ENCODE measurements at regions of chr4 and their contacts with region 1.

Region 1: GRCh38 chr4:145481164-145481941 is at the start of gene SMAD1:
- DNase-seq: peak; percentile 83
- H3K4me3 Mint-ChIP-seq: no peak within 1 kb of the TSS
- H3K27ac Mint-ChIP-seq: no peak within 1 kb of the TSS
- H3K4me1 Mint-ChIP-seq: peaks cover 12% of the 10 kb centered on the region
- H3K27me3 Mint-ChIP-seq: no peaks in the 10 kb centered on the region
- CTCF ChIP-seq: no peak
- total RNA-seq, gene SMAD1: 23.7 and 27.9 TPM in 2 replicates

Region 2: GRCh38 chr4:145125396-145125795 is 356.0 kb before region 1 on chr4:
- CTCF ChIA-PET with region 1: no interaction called
- POLR2A ChIA-PET with region 1: no interaction called
- intact Hi-C with region 1: no loop called
- DNase-seq: no peak
- H3K4me3 Mint-ChIP-seq: no peak overlapping the region
- H3K27ac Mint-ChIP-seq: no peak overlapping the region
- H3K4me1 Mint-ChIP-seq: no peaks in the 10 kb centered on the region
- H3K27me3 Mint-ChIP-seq: no peaks in the 10 kb centered on the region
- CTCF ChIP-seq: no peak

Region 3: DNA sequence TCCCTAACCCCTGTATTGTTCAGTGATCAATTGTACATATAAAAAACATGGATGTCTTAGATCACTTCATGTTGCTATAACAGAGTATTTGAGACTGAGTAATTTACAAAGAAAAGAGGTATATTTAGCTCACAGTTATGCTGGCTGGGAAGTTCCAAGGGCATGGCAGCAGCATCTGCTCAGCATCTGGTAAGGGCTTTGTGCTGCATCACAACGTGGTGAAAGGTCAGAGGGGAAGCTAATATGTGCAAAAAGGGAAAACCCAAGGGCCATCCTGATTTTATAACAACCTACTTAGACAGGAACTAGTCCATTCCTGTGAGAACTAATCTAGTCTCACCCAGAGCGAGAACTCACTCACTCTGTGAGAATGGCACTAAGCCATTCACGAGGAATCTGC is 172.8 kb before region 1 on chr4:
- CTCF ChIA-PET with region 1: no interaction called
- POLR2A ChIA-PET with region 1: no interaction called
- intact Hi-C with region 1: no loop called
- DNase-seq: no peak
- H3K4me3 Mint-ChIP-seq: no peak overlapping the region
- H3K27ac Mint-ChIP-seq: no peak overlapping the region
- H3K4me1 Mint-ChIP-seq: peaks cover 6% of the 10 kb centered on the region
- H3K27me3 Mint-ChIP-seq: no peaks in the 10 kb centered on the region
- CTCF ChIP-seq: no peak

Region 4: DNA sequence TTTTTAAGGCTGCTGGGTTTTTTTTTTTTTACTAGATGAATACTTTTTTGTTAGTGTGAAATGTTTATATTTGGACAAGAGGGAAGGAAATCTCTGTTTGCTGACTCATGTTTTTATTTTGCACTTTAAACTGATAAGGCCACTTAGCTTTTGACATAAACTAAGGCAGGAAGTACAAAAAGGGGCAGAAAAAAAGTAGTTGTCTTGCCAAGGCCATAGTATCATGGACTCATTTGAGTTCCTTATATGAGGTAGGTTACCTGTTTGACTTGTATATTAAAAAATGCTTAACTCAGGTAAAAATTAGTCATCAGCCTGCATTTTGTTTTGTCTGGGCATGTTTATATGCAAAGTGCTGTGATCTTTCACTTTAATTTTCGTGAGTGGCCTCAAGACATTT is 26.3 kb after region 1 on chr4:
- CTCF ChIA-PET with region 1: interaction called, 3 read pairs
- POLR2A ChIA-PET with region 1: interaction called, 22 read pairs
- intact Hi-C with region 1: no loop called
- DNase-seq: peak; percentile 54
- H3K4me3 Mint-ChIP-seq: peak overlapping the region; percentile 50
- H3K27ac Mint-ChIP-seq: peak overlapping the region; percentile 97
- H3K4me1 Mint-ChIP-seq: peaks cover 11% of the 10 kb centered on the region
- H3K27me3 Mint-ChIP-seq: no peaks in the 10 kb centered on the region
- CTCF ChIP-seq: no peak

Region 5: GRCh38 chr4:145557720-145558119 is 76.4 kb after region 1 on chr4:
- CTCF ChIA-PET with region 1: interaction called, 13 read pairs
- POLR2A ChIA-PET with region 1: interaction called, 3 read pairs
- intact Hi-C with region 1: loop called (anchors 1 kb)
- DNase-seq: peak; percentile 72
- H3K4me3 Mint-ChIP-seq: no peak overlapping the region
- H3K27ac Mint-ChIP-seq: peak overlapping the region; percentile 37
- H3K4me1 Mint-ChIP-seq: no peaks in the 10 kb centered on the region
- H3K27me3 Mint-ChIP-seq: no peaks in the 10 kb centered on the region
- CTCF ChIP-seq: peak; percentile 90

Region 6: DNA sequence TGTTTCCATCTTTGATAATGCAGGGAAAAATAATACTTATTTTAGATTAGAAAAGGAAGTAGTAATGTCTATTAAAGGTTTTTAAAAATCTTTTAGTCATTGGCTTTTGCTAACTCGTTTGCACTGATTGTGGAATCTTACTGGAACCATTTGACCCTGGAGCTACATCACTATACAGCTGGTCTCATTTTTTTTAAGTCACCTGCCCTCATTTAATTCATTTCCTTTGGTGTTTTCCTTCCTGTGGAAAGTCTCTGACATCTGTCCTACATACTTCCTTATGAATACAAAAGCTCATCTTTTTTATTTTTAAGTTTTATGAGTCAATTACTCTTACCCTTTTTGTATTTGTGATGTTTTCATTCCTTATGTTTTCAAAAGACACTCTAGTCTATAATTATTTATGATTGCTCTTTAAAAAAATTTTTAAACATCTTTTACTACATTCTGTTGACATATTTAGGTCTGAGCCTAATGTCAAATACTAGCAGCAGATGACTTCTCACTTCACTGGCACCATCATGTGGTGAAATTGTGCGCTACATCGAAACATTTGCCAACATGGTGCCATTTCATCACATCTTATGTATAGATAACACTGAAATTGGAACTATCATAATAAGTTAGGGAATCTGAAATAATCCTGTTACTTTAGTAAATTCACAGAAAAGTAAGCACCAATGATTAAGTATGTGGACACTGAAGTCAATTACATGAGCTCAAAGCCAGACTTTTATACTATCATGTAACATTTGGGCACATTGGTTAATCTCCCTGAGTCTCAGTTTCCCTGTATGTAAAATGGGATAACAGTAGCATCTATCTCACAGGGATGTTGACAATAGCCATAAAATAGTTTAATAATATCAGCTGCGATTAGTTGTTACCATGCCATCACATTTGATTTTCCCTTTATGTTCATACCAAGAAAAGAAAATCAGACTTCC is 128.4 kb after region 1 on chr4:
- CTCF ChIA-PET with region 1: interaction called, 5 read pairs
- POLR2A ChIA-PET with region 1: interaction called, 3 read pairs
- intact Hi-C with region 1: loop called (anchors 2 kb)
- DNase-seq: peak; percentile 83
- H3K4me3 Mint-ChIP-seq: no peak overlapping the region
- H3K27ac Mint-ChIP-seq: no peak overlapping the region
- H3K4me1 Mint-ChIP-seq: no peaks in the 10 kb centered on the region
- H3K27me3 Mint-ChIP-seq: no peaks in the 10 kb centered on the region
- CTCF ChIP-seq: peak; percentile 77

Region 7: DNA sequence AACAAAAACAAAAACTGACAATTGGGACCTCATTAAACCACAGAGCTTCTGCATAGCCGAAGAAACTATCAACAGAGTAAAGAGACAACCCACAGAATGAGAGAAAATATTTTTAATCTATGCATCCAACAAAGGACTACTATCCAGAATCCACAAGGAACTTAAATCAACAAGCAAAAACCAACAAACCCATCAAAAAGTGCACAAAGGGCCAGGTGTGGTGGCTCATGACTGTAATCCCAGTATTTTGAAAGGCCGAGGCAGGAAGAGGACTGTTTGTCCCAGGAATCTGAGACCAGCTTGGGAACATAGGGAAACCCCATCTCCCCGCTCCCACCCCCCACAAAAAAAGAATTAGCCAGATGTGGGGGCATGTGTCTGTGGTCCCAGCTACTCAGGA is 209.3 kb after region 1 on chr4:
- CTCF ChIA-PET with region 1: no interaction called
- POLR2A ChIA-PET with region 1: no interaction called
- intact Hi-C with region 1: no loop called
- DNase-seq: no peak
- H3K4me3 Mint-ChIP-seq: no peak overlapping the region
- H3K27ac Mint-ChIP-seq: no peak overlapping the region
- H3K4me1 Mint-ChIP-seq: no peaks in the 10 kb centered on the region
- H3K27me3 Mint-ChIP-seq: no peaks in the 10 kb centered on the region
- CTCF ChIP-seq: no peak

Measured in MCF 10A (cell line).